ENCODE measurements at regions of chr16 and their contacts with region 1.

Region 1: GRCh38 chr16:50681021-50681885 is at the start of gene SNX20:
- DNase-seq: peak; percentile 41
- H3K4me3 Mint-ChIP-seq: peak within 1 kb of the TSS; percentile 82
- H3K27ac Mint-ChIP-seq: peak within 1 kb of the TSS; percentile 85
- H3K4me1 Mint-ChIP-seq: peaks cover 90% of the 10 kb centered on the region
- H3K27me3 Mint-ChIP-seq: no peaks in the 10 kb centered on the region
- total RNA-seq, gene SNX20: 34.3 TPM in 2 replicates

Region 2: GRCh38 chr16:50553182-50553710 is 128.0 kb before region 1 on chr16:
- intact Hi-C with region 1: no loop called
- DNase-seq: no peak
- H3K4me3 Mint-ChIP-seq: no peak overlapping the region
- H3K27ac Mint-ChIP-seq: no peak overlapping the region
- H3K4me1 Mint-ChIP-seq: peaks cover 8% of the 10 kb centered on the region
- H3K27me3 Mint-ChIP-seq: peaks cover 34% of the 10 kb centered on the region

Region 3: GRCh38 chr16:50611332-50611934 is 69.8 kb before region 1 on chr16:
- intact Hi-C with region 1: no loop called
- DNase-seq: no peak
- H3K4me3 Mint-ChIP-seq: no peak overlapping the region
- H3K27ac Mint-ChIP-seq: no peak overlapping the region
- H3K4me1 Mint-ChIP-seq: peaks cover 9% of the 10 kb centered on the region
- H3K27me3 Mint-ChIP-seq: no peaks in the 10 kb centered on the region

Region 4: DNA sequence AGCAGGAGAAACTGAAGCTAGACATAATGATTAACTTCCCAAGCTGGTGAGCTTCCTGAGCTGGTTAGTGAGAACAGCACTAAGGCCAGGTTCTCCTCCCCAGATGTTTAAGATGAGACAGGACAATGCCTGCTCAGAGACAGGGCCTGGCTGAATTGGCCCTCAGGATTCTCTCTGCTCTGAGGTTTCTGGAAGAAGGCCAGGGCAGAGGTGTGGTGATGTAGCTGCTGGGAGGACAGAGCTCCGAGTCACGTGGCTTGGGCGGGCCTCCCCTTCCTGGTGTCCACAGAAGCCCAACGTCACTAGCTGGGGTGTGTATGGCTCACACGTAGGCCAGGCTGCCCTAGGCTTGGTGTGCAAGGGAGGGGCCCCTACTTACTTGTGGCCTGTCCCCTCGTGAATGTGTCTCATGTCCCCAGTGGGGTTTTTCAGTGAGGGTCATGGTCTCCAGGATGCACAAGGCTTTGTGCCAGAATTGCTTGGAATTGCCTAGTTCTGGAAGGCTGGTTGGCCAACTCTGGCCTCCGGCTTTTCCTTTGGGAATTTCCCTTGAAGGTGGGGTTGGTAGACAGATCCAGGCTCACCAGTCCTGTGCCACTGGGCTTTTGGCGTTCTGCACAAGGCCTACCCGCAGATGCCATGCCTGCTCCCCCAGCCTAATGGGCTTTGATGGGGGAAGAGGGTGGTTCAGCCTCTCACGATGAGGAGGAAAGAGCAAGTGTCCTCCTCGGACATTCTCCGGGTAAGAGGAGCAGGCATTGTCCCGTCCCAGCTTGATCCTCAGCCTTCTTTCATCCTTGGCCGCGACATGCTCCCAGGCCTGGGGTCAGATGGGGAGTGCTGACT is 15.5 kb after region 1 on chr16:
- intact Hi-C with region 1: loop called (anchors 1 kb)
- DNase-seq: peak; percentile 21
- H3K4me3 Mint-ChIP-seq: no peak overlapping the region
- H3K27ac Mint-ChIP-seq: peak overlapping the region; percentile 86
- H3K4me1 Mint-ChIP-seq: peaks cover 85% of the 10 kb centered on the region
- H3K27me3 Mint-ChIP-seq: peaks cover 3% of the 10 kb centered on the region

Region 5: GRCh38 chr16:50709053-50709684 is 27.9 kb after region 1 on chr16:
- intact Hi-C with region 1: loop called (anchors 1 kb)
- DNase-seq: no peak
- H3K4me3 Mint-ChIP-seq: peak overlapping the region; percentile 35
- H3K27ac Mint-ChIP-seq: peak overlapping the region; percentile 81
- H3K4me1 Mint-ChIP-seq: peaks cover 47% of the 10 kb centered on the region
- H3K27me3 Mint-ChIP-seq: no peaks in the 10 kb centered on the region